Ascending aorta (tissue), 2 donors: ENCODE measurements at regions of chr2 and their contacts with region 1.

Region 1: DNA sequence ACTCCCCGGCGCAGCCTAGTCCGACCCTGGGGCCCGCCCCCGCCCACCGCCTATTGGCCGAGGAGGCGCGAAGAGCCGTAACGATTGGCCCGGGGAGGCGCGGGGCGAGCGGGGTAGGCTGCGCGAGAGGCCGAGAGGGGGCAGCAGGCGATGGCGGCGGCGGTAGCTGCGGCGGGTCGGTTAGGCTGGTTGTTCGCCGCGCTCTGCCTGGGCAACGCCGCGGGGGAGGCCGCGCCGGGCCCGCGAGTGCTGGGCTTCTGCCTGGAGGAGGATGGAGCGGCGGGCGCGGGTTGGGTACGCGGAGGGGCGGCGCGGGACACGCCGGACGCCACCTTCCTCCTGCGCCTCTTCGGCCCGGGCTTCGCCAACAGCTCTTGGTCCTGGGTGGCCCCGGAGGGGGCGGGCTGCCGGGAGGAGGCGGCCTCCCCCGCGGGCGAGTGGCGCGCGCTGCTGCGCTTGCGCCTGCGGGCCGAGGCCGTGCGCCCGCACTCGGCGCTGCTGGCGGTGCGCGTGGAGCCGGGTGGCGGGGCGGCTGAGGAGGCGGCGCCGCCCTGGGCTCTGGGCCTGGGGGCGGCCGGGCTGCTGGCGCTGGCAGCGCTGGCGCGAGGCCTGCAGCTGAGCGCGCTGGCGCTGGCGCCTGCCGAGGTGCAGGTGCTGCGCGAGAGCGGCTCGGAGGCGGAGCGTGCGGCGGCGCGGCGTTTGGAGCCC is at the start of gene CNNM3:
- DNase-seq: peak; percentile 87 to 98
- H3K4me3 ChIP-seq: peak within 1 kb of the TSS; percentile 88 to 98
- H3K27ac ChIP-seq: peak within 1 kb of the TSS; percentile 76 to 99
- H3K4me1 ChIP-seq: peaks cover 12 to 41% of the 10 kb centered on the region in 2 donors
- H3K27me3 ChIP-seq: no peaks in the 10 kb centered on the region
- CTCF ChIP-seq: peak; percentile 70 to 75 (median 71)
- total RNA-seq, gene CNNM3: 24.5 TPM

Region 2: DNA sequence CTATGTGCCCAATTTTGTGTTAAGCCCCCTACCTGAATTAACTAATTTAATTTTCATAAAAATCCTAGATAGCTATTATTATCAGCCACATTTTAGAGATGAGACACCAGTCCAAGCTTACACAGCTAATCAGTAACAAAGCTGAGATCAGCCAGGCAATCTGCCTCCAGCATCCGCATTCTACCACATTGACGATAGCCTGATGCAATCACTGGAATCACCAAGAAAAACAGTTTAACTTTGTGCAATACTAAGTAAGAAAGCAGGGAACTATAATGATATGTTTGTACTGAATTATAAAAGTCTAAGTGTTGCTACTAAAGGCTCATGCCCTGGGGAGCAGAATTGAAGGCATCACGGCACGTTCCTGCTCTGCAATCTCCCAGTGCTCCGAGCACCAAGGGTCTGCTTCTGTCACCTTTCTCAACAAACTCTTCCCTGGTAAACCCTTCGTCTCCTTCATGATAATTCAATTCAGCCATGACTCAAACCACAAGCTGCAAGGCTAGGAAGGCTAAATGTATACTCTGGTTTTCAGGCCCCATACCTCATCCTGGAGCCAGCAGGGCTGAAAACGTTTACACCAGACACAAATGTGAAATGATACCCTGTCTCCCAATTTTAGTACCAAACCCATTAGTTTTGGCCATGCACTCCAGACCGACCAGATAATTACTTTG is 197.5 kb before region 1 on chr2:
- intact Hi-C with region 1: loop called (anchors 5 kb)
- DNase-seq: peak in 1 of 2 donors; percentile 77
- H3K4me3 ChIP-seq: no peak overlapping the region
- H3K27ac ChIP-seq: peak overlapping the region; percentile 67
- H3K4me1 ChIP-seq: peaks cover 3 to 25% of the 10 kb centered on the region in 2 donors
- H3K27me3 ChIP-seq: no peaks in the 10 kb centered on the region
- CTCF ChIP-seq: no peak

Region 3: DNA sequence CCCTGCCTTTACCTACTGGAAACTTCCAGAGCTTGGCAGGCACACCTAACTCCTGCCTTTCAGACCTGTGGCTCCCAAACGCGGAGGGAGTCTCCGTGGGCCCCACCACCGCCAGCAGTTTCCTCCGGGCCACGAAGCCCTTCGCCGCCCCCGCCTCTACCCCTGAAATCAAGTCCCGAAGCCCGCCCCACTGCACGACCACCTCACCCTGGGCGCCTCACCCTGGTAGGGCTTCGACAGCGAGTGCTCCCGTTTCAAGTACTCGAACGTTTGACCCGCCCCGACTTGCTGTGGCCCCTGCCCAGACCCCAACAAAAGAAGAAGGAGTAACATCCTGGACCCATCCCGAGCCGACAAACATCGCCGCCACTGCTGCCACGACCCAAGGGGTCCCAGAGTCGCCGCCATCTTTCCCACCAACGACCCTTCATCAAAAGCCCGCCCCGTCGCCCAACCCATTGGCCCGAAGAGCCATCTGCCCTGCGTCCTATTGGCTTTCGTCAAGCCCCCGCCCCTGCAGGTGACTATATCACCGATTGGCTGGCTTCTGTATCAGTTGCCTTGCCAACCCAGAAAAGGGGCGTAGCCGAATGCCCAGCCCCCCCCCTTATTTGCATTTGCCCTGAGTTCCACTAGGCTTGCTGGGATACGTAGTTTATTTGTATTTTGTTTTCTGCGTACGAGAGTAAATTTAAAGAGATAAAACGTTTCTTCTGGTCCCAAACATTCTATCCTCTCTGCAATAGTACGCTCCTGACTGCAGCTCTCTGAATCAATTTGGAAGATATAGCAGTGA is 76.5 kb before region 1 on chr2 and contains the start of gene LMAN2L:
- intact Hi-C with region 1: loop called (anchors 1 kb)
- DNase-seq: peak; percentile 97 to 99
- H3K4me3 ChIP-seq: peak within 1 kb of the TSS; percentile 80 to 92
- H3K27ac ChIP-seq: peak within 1 kb of the TSS; percentile 66 to 73
- H3K4me1 ChIP-seq: peaks cover 0 to 19% of the 10 kb centered on the region in 2 donors
- H3K27me3 ChIP-seq: no peaks in the 10 kb centered on the region
- CTCF ChIP-seq: peak in 1 of 3 experiments; percentile 9
- total RNA-seq, gene LMAN2L: 9.5 TPM

Region 4: GRCh38 chr2:96856776-96857673 is 40.7 kb after region 1 on chr2:
- intact Hi-C with region 1: loop called (anchors 1 kb)
- DNase-seq: no peak
- H3K4me3 ChIP-seq: peak overlapping the region; percentile 63 to 84
- H3K27ac ChIP-seq: peak overlapping the region; percentile 61 to 79
- H3K4me1 ChIP-seq: peaks cover 3 to 22% of the 10 kb centered on the region in 2 donors
- H3K27me3 ChIP-seq: no peaks in the 10 kb centered on the region
- CTCF ChIP-seq: no peak

Region 5: GRCh38 chr2:96951093-96951654 is 134.9 kb after region 1 on chr2:
- intact Hi-C with region 1: loop called (anchors 2 kb)
- DNase-seq: peak in 1 of 2 donors; percentile 84
- H3K4me3 ChIP-seq: no peak overlapping the region
- H3K27ac ChIP-seq: no peak overlapping the region
- H3K4me1 ChIP-seq: peaks cover 4 to 18% of the 10 kb centered on the region in 2 donors
- H3K27me3 ChIP-seq: no peaks in the 10 kb centered on the region
- CTCF ChIP-seq: peak; percentile 91 to 97 (median 96)